Right cardiac atrium (tissue), 5 donors: ENCODE measurements at regions of chr11 and their contacts with region 1.

Region 1: GRCh38 chr11:43072096-43072495 is 239.7 kb upstream of the API5 start:
- DNase-seq: no peak
- ATAC-seq: no peak
- H3K4me3 ChIP-seq: no peak overlapping the region
- H3K27ac ChIP-seq: no peak overlapping the region
- H3K4me1 ChIP-seq: no peaks in the 10 kb centered on the region
- H3K27me3 ChIP-seq: no peaks in the 10 kb centered on the region

Region 2: DNA sequence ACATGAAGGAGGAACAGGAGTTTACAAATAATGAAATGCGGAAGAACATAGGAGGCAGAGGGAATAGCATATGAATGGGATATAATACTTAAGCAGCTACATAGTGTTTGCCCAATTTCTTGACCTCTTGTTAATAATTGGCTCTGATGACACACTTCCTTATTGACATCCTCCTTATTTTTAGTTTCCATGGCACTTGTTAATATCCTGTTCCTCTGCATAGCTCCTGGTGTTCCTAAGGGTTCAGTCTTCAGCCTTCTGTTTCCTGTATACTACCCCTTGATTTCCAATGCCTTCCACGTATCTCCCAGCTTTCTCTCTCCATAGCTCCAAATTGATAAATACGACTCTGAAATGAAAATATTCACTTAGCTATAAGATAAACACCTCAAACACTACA is 424.1 kb before region 1 on chr11:
- intact Hi-C with region 1: loop called in 1 of 4 experiments (anchors 10 kb)
- DNase-seq: no peak
- ATAC-seq: no peak
- H3K4me3 ChIP-seq: no peak overlapping the region
- H3K27ac ChIP-seq: no peak overlapping the region
- H3K4me1 ChIP-seq: no peaks in the 10 kb centered on the region
- H3K27me3 ChIP-seq: no peaks in the 10 kb centered on the region

Region 3: GRCh38 chr11:42967653-42968375 is 104.3 kb before region 1 on chr11:
- intact Hi-C with region 1: no loop called
- DNase-seq: no peak
- ATAC-seq: no peak
- H3K4me3 ChIP-seq: no peak overlapping the region
- H3K27ac ChIP-seq: no peak overlapping the region
- H3K4me1 ChIP-seq: no peaks in the 10 kb centered on the region
- H3K27me3 ChIP-seq: no peaks in the 10 kb centered on the region

Region 4: DNA sequence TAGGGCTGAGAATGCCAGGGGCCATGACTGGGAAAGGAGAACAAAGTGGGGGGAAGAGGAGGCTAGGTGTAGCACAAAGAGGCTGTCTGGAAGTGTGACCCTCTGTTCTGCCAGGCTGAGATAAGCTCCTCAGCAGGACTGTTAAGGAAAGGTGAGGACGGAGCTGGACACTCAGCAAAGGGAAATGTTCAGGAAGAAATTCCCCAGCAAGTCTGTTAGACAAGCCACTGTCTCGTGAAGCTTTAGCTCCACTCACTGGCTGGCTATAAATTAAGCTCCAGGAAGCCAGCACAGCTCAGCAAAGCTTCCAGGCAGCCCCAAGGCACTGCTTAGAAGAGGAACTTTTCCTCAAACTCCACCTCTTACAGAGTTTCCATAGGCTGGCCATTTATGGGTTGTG is 58.5 kb after region 1 on chr11:
- intact Hi-C with region 1: no loop called
- DNase-seq: no peak
- ATAC-seq: no peak
- H3K4me3 ChIP-seq: no peak overlapping the region
- H3K27ac ChIP-seq: no peak overlapping the region
- H3K4me1 ChIP-seq: no peaks in the 10 kb centered on the region
- H3K27me3 ChIP-seq: no peaks in the 10 kb centered on the region

Region 5: GRCh38 chr11:43172477-43172876 is 100.4 kb after region 1 on chr11:
- intact Hi-C with region 1: no loop called
- DNase-seq: no peak
- ATAC-seq: no peak
- H3K4me3 ChIP-seq: no peak overlapping the region
- H3K27ac ChIP-seq: no peak overlapping the region
- H3K4me1 ChIP-seq: no peaks in the 10 kb centered on the region
- H3K27me3 ChIP-seq: no peaks in the 10 kb centered on the region